B cell (primary cell): ENCODE measurements at regions of chr17 and their contacts with region 1.

Region 1: GRCh38 chr17:48961516-48962233 is 6.7 kb downstream of the GIP start:
- DNase-seq: no peak
- ATAC-seq: no peak
- H3K4me3 ChIP-seq: no peak overlapping the region
- H3K4me3 Mint-ChIP-seq: no peak overlapping the region
- H3K27ac ChIP-seq: no peak overlapping the region
- H3K27ac Mint-ChIP-seq: no peak overlapping the region
- H3K4me1 ChIP-seq: no peaks in the 10 kb centered on the region
- H3K4me1 Mint-ChIP-seq: no peaks in the 10 kb centered on the region
- H3K27me3 ChIP-seq: peaks cover 0 to 29% (median 9%) of the 10 kb centered on the region in 4 experiments
- H3K27me3 Mint-ChIP-seq: peaks cover 33% of the 10 kb centered on the region
- CTCF ChIP-seq: no peak

Region 2: DNA sequence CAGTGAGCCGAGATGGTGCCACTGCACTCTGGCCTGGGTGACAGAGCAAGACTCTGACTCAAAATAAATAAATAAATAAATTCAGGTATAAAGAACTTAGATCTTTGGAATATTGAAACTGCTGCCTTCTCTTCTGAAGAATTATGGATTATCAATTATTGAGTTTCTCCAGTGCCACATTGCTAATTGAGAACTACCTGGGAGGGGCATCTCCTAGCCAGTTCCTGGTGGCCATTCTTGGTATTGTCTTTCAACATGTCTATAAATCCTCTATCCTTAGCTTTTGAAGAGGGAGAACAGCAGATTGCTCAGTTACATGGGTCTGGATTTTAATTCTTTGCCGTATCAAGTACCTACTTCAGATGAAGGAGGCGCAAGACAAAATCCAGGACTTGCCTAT is 101.6 kb before region 1 on chr17:
- CTCF ChIA-PET with region 1: no interaction called
- POLR2A ChIA-PET with region 1: no interaction called
- intact Hi-C with region 1: no loop called
- DNase-seq: no peak
- ATAC-seq: no peak
- H3K4me3 ChIP-seq: no peak overlapping the region
- H3K4me3 Mint-ChIP-seq: no peak overlapping the region
- H3K27ac ChIP-seq: no peak overlapping the region
- H3K27ac Mint-ChIP-seq: no peak overlapping the region
- H3K4me1 ChIP-seq: no peaks in the 10 kb centered on the region
- H3K4me1 Mint-ChIP-seq: no peaks in the 10 kb centered on the region
- H3K27me3 ChIP-seq: no peaks in the 10 kb centered on the region
- H3K27me3 Mint-ChIP-seq: no peaks in the 10 kb centered on the region
- CTCF ChIP-seq: peak; percentile 59

Region 3: DNA sequence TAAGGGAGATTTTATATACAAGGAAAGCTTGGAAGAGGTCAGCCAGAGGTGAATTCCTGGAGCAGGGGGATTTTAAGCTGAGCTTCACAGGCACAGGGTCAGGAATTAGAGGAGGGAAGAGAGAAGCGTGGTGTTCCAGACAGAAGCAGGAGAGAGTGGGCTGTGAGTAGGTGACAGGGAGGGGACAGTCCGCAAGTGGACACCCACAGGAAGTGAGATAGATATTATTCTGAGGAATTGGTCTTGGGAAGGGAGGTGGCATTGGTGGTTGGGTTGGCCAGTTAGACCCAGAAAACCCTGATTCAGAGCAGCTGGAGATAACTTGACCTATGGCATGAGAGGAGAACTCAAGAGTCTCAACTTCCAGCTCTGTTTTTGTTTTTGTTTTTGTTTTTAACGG is 438.3 kb after region 1 on chr17:
- CTCF ChIA-PET with region 1: no interaction called
- POLR2A ChIA-PET with region 1: interaction called, 12 read pairs
- intact Hi-C with region 1: no loop called
- DNase-seq: no peak
- ATAC-seq: no peak
- H3K4me3 ChIP-seq: no peak overlapping the region
- H3K4me3 Mint-ChIP-seq: no peak overlapping the region
- H3K27ac ChIP-seq: no peak overlapping the region
- H3K27ac Mint-ChIP-seq: no peak overlapping the region
- H3K4me1 ChIP-seq: peaks cover 19 to 27% of the 10 kb centered on the region in 2 donors
- H3K4me1 Mint-ChIP-seq: peaks cover 24% of the 10 kb centered on the region
- H3K27me3 ChIP-seq: no peaks in the 10 kb centered on the region
- H3K27me3 Mint-ChIP-seq: no peaks in the 10 kb centered on the region
- CTCF ChIP-seq: no peak